ENCODE measurements at regions of chr9 and their contacts with region 1.

Region 1: DNA sequence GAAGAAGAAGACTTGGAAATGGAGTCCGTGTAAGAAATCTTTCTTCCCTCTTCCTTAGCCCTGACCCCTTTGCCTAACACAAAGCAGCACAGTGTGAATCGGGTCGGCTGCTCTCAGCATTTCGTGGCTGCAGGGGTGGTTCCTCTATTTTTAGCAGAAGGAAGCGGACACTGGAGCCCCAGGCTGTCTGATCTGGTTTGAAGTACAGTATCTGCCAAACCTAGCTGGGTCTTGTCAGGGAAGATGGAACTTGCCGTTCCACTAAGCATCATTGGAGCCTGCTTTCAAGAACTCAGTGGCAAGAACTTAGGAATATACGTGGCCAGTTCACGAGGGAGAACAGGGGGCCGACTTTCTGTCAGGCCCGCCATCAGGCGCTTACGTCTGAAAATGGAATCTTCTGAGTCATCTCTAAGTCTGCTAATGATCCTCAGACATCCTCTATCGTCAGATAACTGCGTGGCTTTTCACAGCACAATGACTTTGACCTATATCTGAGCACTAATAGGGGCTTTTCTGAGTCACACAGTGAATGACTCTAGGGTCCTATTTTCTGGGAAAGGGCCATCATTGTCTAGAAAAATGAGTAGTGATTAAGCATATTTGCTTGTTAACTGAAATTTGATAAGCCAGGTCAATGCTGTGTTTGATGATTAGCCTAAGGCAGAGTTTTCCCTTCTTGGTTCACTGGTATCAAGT is 43.3 kb upstream of the NCS1 start:
- DNase-seq: peak; percentile 81
- H3K4me3 Mint-ChIP-seq: peak overlapping the region; percentile 79
- H3K27ac Mint-ChIP-seq: peak overlapping the region; percentile 97
- H3K4me1 Mint-ChIP-seq: peaks cover 43% of the 10 kb centered on the region
- H3K27me3 Mint-ChIP-seq: no peaks in the 10 kb centered on the region

Region 2: GRCh38 chr9:130172161-130172857 is 43.4 kb after region 1 on chr9 and contains the start of gene NCS1:
- intact Hi-C with region 1: loop called (anchors 1 kb)
- DNase-seq: peak; percentile 73
- H3K4me3 Mint-ChIP-seq: peak within 1 kb of the TSS; percentile 67
- H3K27ac Mint-ChIP-seq: no peak within 1 kb of the TSS
- H3K4me1 Mint-ChIP-seq: no peaks in the 10 kb centered on the region
- H3K27me3 Mint-ChIP-seq: peaks cover 46% of the 10 kb centered on the region
- total RNA-seq, gene NCS1: 5.3 and 5.4 TPM in 2 replicates

Region 3: DNA sequence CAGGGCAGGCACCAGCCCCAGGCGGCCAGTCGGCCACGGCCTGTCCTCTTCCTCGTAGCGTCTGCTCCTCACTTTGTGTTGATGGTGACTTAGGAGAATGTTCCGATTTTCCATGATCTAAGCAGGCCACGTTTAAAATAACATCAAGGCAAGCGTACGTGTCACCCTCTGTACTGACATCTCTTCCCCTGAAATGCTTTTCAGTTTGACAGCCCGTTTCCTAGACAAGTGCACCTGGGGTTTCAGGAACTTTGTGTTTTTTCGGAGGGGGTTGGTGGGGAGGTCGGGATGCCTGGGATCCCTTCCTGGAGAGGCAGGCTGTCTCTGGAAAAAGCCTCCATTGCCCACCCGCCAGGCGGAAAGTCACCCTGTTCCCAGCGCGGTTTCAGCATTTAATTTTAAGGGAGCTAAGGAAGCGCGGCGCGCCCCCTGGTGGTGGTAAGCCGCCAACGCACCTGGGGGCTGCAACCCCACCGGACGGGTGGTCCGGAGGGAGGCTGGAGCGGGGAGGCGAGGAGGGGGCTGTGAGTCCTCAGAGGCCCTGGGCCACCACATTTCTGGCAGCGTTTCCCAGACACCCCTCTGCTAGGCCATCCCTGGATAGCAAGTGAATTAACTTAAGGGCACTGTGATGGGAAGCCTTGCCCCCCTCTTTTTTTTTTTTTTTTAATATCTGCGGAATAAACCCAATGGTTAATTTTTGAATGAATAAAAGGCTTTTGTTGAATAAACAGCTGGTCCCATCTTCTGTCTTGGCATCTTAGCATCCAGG is 107.2 kb after region 1 on chr9:
- intact Hi-C with region 1: loop called (anchors 1 kb)
- DNase-seq: peak; percentile 91
- H3K4me3 Mint-ChIP-seq: peak overlapping the region; percentile 39
- H3K27ac Mint-ChIP-seq: no peak overlapping the region
- H3K4me1 Mint-ChIP-seq: peaks cover 18% of the 10 kb centered on the region
- H3K27me3 Mint-ChIP-seq: no peaks in the 10 kb centered on the region

Measured in activated CD4-positive, alpha-beta T cell treated with anti-CD3 and anti-CD28 coated beads, Interleukin-2, amount 10 ng/mL, durations not matched to agents 24 days and 14 days (primary cell).